ENCODE measurements at regions of chr2 and their contacts with region 1.

Region 1: DNA sequence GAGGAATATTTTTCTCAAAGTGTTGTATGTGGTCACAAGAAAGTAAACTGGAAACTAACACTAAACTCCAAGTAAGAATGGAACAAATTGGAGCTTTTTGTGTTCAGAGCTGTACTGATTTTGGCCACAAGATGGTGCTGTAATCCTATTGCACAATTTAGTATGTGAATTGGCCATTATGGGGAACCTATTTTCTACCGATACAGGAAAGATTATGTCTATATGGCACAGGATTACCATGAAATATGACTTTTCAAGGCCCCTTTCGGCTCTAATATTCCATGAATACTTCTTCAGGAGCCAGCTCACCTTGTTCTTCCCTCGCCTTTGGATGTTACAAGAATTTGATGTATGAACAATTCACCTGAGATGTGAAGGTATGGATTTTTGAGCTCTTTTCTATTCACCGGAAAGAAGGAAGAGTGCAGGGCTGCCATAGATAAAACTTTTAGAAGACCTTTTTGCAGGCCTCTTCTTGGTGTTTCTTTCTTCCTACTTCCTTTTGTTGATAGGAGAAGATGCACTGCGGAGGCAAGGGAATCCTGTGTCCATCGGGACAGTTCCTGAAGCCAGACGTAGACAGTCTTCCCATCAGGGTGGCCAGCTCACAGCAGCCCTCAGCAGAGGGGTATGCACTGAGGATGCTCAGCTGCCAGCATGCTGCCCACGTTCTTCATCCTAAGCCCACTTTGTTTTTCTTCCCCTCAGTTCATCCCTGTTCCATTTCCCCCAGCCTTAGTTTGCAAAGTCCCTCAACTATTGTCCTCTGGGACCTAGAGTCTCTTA is 13.3 kb downstream of the MRPL44 start:
- DNase-seq: peak; percentile 69
- ATAC-seq: peak; percentile 81
- H3K4me3 Mint-ChIP-seq: no peak overlapping the region
- H3K27ac Mint-ChIP-seq: no peak overlapping the region
- H3K4me1 Mint-ChIP-seq: peaks cover 14% of the 10 kb centered on the region
- H3K27me3 Mint-ChIP-seq: no peaks in the 10 kb centered on the region

Region 2: DNA sequence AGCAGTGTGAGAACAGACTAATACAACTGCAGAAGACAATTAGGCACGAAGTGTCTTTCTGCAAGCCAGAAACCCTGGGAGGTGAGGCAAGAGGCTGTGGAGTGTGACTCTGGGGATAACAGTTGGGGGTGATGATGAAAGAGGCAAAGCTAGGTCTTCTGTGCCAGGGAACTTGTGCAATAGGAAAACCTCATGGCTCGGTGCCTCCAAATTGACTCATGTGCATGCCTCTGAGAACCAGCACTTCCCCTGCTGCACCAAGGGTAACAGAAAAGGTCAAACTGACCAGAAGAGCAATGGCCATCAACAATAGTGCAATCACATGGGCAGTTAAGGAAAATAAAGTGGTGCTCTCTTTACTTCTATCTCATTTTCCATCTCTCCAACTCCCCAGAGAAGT is 504.7 kb before region 1 on chr2:
- CTCF ChIA-PET with region 1: no interaction called
- POLR2A ChIA-PET with region 1: no interaction called
- intact Hi-C with region 1: no loop called
- DNase-seq: no peak
- ATAC-seq: no peak
- H3K4me3 Mint-ChIP-seq: no peak overlapping the region
- H3K27ac Mint-ChIP-seq: no peak overlapping the region
- H3K4me1 Mint-ChIP-seq: no peaks in the 10 kb centered on the region
- H3K27me3 Mint-ChIP-seq: no peaks in the 10 kb centered on the region

Region 3: DNA sequence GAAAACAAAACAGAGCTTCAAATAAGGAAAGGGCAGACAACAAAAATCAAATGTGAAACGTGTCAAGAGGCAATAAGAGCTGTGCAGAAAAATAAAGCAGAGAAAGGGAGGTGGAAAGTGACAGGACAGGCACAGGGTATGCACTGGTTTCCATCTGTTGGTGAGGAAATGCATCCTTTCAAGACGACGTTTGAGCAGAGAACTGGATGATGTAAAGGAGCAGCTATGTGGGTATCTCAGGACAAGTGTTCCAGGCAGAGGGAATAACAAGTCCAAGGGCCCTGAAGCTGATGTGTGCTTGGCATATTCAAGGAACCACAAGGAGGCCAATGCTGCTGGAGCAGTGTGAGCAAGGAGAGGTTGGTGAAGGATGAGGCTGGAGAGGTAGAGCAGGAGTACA is 237.5 kb after region 1 on chr2:
- CTCF ChIA-PET with region 1: no interaction called
- POLR2A ChIA-PET with region 1: interaction called, 13 read pairs
- intact Hi-C with region 1: no loop called
- DNase-seq: no peak
- ATAC-seq: no peak
- H3K4me3 Mint-ChIP-seq: no peak overlapping the region
- H3K27ac Mint-ChIP-seq: no peak overlapping the region
- H3K4me1 Mint-ChIP-seq: no peaks in the 10 kb centered on the region
- H3K27me3 Mint-ChIP-seq: peaks cover 11% of the 10 kb centered on the region

Region 4: GRCh38 chr2:224284134-224284946 is 313.8 kb after region 1 on chr2:
- CTCF ChIA-PET with region 1: interaction called, 199 read pairs
- POLR2A ChIA-PET with region 1: no interaction called
- intact Hi-C with region 1: loop called (anchors 1 kb)
- DNase-seq: peak; percentile 22
- ATAC-seq: peak; percentile 58
- H3K4me3 Mint-ChIP-seq: no peak overlapping the region
- H3K27ac Mint-ChIP-seq: no peak overlapping the region
- H3K4me1 Mint-ChIP-seq: no peaks in the 10 kb centered on the region
- H3K27me3 Mint-ChIP-seq: peaks cover 13% of the 10 kb centered on the region

Region 5: DNA sequence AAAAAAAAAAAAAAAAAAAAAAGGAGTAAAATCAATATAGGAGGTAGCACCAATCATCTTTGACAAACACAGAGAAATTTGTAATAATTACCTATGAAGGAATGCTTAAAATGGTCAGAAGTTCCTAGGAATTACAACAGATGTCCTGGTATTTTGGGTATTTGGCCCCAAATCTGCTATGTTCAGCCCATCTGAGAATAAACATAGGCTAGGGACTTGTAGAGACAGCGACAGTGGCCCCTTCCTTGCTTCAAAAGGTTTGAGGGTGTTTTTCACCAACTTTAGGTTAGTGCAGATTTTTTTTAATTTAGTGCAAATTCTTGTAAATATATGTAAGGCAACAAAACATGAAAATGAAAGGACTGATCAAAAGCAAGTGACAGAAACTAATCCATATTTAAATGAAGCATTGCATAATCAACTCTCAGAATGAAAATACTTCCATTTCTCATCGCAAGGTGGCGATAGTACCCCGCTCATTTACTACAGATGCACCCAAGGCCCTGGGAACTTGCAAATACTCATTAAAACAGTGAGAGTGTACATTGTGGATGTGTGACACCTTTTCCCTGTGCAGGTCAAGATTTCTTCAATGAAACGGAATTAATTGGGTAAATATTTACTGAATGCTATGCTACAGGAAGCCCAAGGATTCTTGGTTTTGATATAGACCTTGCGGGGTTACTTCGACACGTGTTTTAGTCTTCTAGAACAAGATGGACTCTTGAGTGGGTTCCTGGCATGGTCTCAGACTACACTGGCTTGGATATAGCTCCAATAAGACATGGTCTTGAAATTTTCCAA is 386.8 kb after region 1 on chr2:
- CTCF ChIA-PET with region 1: interaction called, 5 read pairs
- POLR2A ChIA-PET with region 1: no interaction called
- intact Hi-C with region 1: loop called in 1 of 2 experiments (anchors 2 kb)
- DNase-seq: peak; percentile 71
- ATAC-seq: peak; percentile 78
- H3K4me3 Mint-ChIP-seq: no peak overlapping the region
- H3K27ac Mint-ChIP-seq: no peak overlapping the region
- H3K4me1 Mint-ChIP-seq: no peaks in the 10 kb centered on the region
- H3K27me3 Mint-ChIP-seq: no peaks in the 10 kb centered on the region

Region 6: DNA sequence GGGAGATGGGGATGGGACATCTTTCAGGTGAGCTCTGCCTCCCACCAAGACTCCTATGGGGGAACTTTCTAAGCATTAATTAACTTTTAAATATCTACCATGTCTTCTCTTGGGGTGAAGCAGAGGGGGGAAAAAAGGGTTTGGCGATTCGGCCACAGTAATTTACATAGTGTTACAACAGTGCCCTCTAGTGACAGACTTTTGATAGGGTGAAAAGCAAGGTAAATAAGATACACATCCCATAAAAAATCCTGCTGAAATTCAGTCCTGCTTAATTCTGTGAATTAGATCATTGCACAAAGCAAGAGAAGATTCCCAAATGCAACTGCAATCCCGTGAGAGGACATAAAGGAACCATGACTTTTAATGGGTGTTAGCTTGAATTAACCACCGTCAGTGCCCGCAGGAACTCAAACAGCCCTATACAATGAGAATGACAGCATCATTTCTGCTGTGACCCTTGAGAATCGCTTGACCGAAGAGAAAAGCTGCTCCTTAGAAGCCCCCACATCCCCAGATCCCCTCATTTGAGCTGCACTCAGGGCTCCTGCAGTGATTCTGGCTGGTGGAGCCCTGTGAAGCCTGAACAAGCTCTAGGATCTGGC is 398.6 kb after region 1 on chr2:
- CTCF ChIA-PET with region 1: interaction called, 23 read pairs
- POLR2A ChIA-PET with region 1: no interaction called
- intact Hi-C with region 1: loop called (anchors 1 to 2 kb)
- DNase-seq: no peak
- ATAC-seq: peak; percentile 60
- H3K4me3 Mint-ChIP-seq: no peak overlapping the region
- H3K27ac Mint-ChIP-seq: no peak overlapping the region
- H3K4me1 Mint-ChIP-seq: no peaks in the 10 kb centered on the region
- H3K27me3 Mint-ChIP-seq: no peaks in the 10 kb centered on the region

Region 7: GRCh38 chr2:224650815-224651439 is 680.4 kb after region 1 on chr2:
- CTCF ChIA-PET with region 1: interaction called, 6 read pairs
- POLR2A ChIA-PET with region 1: no interaction called
- intact Hi-C with region 1: loop called (anchors 2 kb)
- DNase-seq: no peak
- ATAC-seq: peak; percentile 53
- H3K4me3 Mint-ChIP-seq: no peak overlapping the region
- H3K27ac Mint-ChIP-seq: no peak overlapping the region
- H3K4me1 Mint-ChIP-seq: no peaks in the 10 kb centered on the region
- H3K27me3 Mint-ChIP-seq: peaks cover 2% of the 10 kb centered on the region